GM10248 (cell line): ENCODE measurements at regions of chr5 and their contacts with region 1.

Region 1: DNA sequence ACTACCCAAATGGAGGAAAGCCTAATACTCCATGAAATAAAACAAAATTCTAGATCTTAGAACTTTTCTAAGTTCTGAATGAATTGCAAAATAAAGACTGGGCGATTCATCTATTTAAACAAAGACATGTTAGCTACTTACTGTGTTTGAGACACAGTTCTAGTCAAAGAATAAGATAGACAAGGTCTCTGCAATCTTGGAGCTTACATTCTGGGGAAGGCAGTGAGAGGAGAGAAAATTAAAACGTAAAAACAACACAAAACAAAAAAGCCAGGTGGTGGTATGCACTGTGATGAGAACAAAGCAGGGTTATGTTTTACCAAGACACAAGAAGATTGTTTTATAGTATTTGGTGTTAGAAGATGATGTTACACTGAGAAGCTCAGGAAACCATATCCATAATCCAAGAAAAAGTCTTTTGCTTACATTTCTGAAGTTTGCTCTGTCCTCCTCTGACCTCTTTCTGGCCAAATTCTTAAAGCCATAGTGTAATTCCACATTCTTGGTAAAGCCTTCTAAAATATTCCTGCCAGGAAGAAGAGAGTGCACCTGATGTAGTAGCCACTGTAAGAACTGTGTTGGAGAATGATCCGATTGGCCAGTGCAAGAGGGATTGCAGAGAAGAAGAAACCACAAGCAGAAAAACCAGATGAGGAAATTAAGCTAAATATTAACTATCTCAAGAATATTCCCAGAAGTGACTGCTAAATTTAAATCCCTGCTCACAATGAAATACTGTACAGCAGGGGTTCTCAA is 218.4 kb downstream of the PCSK1 start:
- DNase-seq: no peak
- CTCF ChIP-seq: no peak

Region 2: GRCh38 chr5:96175090-96175489 is 39.5 kb before region 1 on chr5:
- CTCF ChIA-PET with region 1: no interaction called
- POLR2A ChIA-PET with region 1: no interaction called
- DNase-seq: no peak
- CTCF ChIP-seq: peak; percentile 2

Region 3: GRCh38 chr5:96226941-96227552 is 12.4 kb after region 1 on chr5:
- CTCF ChIA-PET with region 1: interaction called, 24 read pairs
- POLR2A ChIA-PET with region 1: no interaction called
- DNase-seq: no peak
- CTCF ChIP-seq: no peak

Region 4: GRCh38 chr5:96315431-96315830 is 100.8 kb after region 1 on chr5:
- CTCF ChIA-PET with region 1: no interaction called
- POLR2A ChIA-PET with region 1: no interaction called
- DNase-seq: no peak
- CTCF ChIP-seq: no peak